CD4-positive, alpha-beta T cell (primary cell): ENCODE measurements at regions of chr6 and their contacts with region 1.

Region 1: DNA sequence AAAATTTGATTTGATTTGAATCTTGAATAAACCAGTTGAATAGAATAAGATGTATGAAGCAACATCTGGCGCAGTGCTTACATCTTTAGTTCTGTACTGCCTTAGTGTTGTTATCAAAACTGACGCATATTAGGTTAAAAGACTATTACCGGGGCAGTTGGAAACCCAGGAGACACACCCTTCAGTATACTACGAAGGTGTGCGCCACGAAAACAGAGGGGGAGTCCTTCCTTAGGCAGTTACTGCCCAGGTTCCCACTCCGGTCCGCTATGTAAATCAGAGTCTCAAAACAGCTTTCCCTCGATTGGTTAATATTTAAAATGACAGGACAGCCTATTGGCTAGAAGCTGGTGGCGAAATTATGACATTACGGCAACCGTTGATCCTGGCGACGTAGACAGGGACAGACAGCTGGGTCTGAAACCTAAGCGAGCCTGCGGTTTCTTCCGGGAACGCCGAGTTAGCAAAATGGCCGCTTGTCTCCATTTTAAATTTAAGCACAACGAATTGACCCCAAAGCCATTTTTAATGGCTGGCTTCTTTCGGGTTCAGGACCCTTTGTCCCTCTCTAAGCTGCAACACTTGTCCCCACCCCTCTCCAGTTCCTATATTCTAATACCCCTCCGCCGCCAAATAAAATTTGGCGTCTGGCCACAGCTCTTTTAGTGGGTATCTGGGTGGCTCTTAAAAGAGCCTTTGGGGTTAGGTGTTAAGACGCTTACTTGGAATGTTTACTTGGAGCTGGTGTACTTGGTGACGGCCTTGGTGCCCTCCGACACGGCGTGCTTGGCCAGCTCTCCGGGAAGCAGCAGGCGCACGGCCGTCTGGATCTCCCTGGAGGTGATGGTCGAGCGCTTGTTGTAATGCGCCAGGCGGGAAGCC is 35.8 kb downstream of the HFE start:
- DNase-seq: peak; percentile 75 to 98 (median 92)
- ATAC-seq: peak; percentile 56
- H3K4me3 ChIP-seq: peak overlapping the region; percentile 88
- H3K4me3 Mint-ChIP-seq: peak overlapping the region; percentile 97
- H3K27ac ChIP-seq: peak overlapping the region; percentile 84 to 95
- H3K27ac Mint-ChIP-seq: peak overlapping the region; percentile 98
- H3K4me1 ChIP-seq: peaks cover 23% of the 10 kb centered on the region
- H3K4me1 Mint-ChIP-seq: peaks cover 41% of the 10 kb centered on the region
- H3K27me3 ChIP-seq: no peaks in the 10 kb centered on the region
- H3K27me3 Mint-ChIP-seq: peaks cover 13% of the 10 kb centered on the region
- CTCF ChIP-seq: no peak

Region 2: DNA sequence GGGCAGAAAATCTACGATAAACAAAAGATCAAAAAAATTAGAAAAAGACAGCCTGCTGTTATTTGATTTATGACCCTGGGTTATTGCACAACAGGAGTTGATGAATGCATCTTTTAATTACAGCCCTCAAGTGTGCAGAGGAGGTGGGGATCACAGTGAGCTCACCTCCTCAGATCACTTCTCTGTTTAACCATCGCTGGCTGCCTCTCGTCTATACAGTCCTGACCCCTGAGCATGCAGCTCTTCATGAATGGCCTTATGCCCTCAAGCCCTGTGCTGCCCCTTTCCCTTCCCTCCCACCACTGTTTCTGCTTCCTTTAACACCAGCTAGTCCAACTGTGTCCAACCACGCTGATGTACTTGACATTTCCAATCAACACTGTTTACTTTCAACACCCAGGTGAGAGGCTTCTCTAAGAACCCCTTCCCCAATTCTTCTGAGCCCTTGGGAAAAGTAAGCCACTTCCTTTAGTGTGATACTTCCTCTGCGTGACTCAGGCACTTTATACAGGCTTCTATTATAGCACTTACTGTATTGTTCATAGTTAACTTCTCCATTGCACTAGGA is 1126.7 kb before region 1 on chr6:
- CTCF ChIA-PET with region 1: no interaction called
- POLR2A ChIA-PET with region 1: no interaction called
- intact Hi-C with region 1: no loop called
- DNase-seq: no peak
- ATAC-seq: no peak
- H3K4me3 ChIP-seq: no peak overlapping the region
- H3K4me3 Mint-ChIP-seq: peak overlapping the region; percentile 34
- H3K27ac ChIP-seq: no peak overlapping the region
- H3K27ac Mint-ChIP-seq: peak overlapping the region; percentile 62
- H3K4me1 ChIP-seq: peaks cover 45% of the 10 kb centered on the region
- H3K4me1 Mint-ChIP-seq: peaks cover 87% of the 10 kb centered on the region
- H3K27me3 ChIP-seq: no peaks in the 10 kb centered on the region
- H3K27me3 Mint-ChIP-seq: no peaks in the 10 kb centered on the region
- CTCF ChIP-seq: no peak

Region 3: GRCh38 chr6:26031595-26032339 is 91.3 kb before region 1 on chr6:
- CTCF ChIA-PET with region 1: interaction called, 8 read pairs
- POLR2A ChIA-PET with region 1: interaction called, 185 read pairs
- intact Hi-C with region 1: loop called in 1 of 2 experiments (anchors 2 kb)
- DNase-seq: peak; percentile 73 to 94 (median 81)
- ATAC-seq: peak; percentile 65
- H3K4me3 ChIP-seq: peak overlapping the region; percentile 64
- H3K4me3 Mint-ChIP-seq: peak overlapping the region; percentile 97
- H3K27ac ChIP-seq: peak overlapping the region; percentile 42 to 72
- H3K27ac Mint-ChIP-seq: peak overlapping the region; percentile 99
- H3K4me1 ChIP-seq: peaks cover 35% of the 10 kb centered on the region
- H3K4me1 Mint-ChIP-seq: peaks cover 46% of the 10 kb centered on the region
- H3K27me3 ChIP-seq: no peaks in the 10 kb centered on the region
- H3K27me3 Mint-ChIP-seq: no peaks in the 10 kb centered on the region
- CTCF ChIP-seq: peak; percentile 22

Region 4: GRCh38 chr6:26075063-26075717 is 47.8 kb before region 1 on chr6:
- CTCF ChIA-PET with region 1: no interaction called
- POLR2A ChIA-PET with region 1: no interaction called
- intact Hi-C with region 1: no loop called
- DNase-seq: no peak
- ATAC-seq: no peak
- H3K4me3 ChIP-seq: no peak overlapping the region
- H3K4me3 Mint-ChIP-seq: no peak overlapping the region
- H3K27ac ChIP-seq: no peak overlapping the region
- H3K27ac Mint-ChIP-seq: no peak overlapping the region
- H3K4me1 ChIP-seq: no peaks in the 10 kb centered on the region
- H3K4me1 Mint-ChIP-seq: no peaks in the 10 kb centered on the region
- H3K27me3 ChIP-seq: no peaks in the 10 kb centered on the region
- H3K27me3 Mint-ChIP-seq: no peaks in the 10 kb centered on the region
- CTCF ChIP-seq: no peak

Region 5: DNA sequence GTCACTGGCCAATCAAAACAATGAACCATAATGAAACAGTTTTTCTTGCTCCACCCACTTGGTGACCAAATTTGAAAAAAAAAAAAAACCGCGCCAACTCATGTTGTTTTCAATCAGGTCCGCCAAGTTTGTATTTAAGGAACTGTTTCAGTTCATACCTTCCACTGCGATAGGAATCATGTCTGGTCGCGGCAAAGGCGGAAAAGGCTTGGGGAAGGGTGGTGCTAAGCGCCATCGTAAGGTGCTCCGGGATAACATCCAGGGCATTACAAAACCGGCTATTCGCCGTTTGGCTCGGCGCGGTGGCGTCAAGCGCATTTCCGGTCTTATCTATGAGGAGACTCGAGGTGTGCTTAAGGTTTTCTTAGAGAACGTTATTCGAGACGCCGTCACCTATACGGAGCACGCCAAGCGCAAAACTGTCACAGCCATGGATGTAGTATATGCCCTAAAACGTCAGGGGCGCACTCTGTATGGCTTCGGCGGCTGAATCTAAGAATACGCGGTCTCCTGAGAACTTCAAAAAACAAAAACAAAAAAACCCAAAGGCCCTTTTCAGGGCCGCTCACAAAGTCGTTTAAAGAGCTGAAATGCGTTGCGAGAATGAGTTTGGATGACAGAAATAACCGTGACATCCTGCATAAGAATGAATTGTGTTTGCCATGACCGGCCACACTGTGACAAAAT is 19.1 kb before region 1 on chr6:
- CTCF ChIA-PET with region 1: interaction called, 24 read pairs
- POLR2A ChIA-PET with region 1: interaction called, 362 read pairs
- intact Hi-C with region 1: loop called (anchors 1 kb)
- DNase-seq: peak; percentile 84 to 96 (median 90)
- ATAC-seq: peak; percentile 88
- H3K4me3 ChIP-seq: peak overlapping the region; percentile 58
- H3K4me3 Mint-ChIP-seq: peak overlapping the region; percentile 94
- H3K27ac ChIP-seq: peak overlapping the region; percentile 83 to 85
- H3K27ac Mint-ChIP-seq: peak overlapping the region; percentile 99
- H3K4me1 ChIP-seq: peaks cover 16% of the 10 kb centered on the region
- H3K4me1 Mint-ChIP-seq: peaks cover 13% of the 10 kb centered on the region
- H3K27me3 ChIP-seq: no peaks in the 10 kb centered on the region
- H3K27me3 Mint-ChIP-seq: peaks cover 5% of the 10 kb centered on the region
- CTCF ChIP-seq: peak; percentile 58

Region 6: DNA sequence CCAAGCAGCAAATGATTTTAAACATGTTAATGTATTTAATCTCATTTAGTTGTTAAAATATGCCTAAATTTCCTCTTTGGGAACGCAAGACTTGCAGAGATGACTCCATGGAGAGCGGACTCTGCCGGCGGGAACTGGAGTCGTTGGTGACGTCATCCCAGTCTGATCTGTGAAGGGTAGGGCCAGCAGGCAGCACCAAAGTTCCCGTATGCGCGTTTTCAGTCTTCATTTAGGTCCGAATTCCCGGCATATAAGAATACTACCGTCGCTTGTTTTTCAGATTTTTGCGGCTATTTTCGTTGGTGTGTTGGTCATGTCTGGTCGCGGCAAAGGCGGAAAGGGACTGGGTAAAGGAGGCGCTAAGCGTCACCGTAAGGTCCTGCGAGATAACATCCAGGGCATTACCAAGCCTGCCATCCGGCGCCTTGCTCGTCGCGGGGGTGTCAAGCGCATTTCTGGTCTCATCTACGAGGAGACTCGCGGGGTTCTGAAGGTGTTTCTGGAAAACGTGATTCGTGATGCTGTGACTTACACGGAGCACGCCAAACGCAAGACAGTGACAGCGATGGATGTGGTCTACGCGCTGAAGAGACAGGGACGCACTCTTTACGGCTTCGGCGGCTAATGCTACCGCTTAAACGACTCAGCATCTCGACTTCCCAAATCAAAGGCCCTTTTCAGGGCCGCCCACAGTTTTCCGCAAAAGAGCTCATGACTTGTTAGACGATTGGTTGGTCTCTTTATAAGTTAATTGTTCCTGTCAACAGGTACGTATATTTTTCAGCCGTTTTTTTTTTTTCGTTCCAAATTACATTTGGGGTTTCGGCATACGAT is 81.5 kb after region 1 on chr6:
- CTCF ChIA-PET with region 1: no interaction called
- POLR2A ChIA-PET with region 1: interaction called, 1,005 read pairs
- intact Hi-C with region 1: loop called in 1 of 2 experiments (anchors 1 kb)
- DNase-seq: peak; percentile 73 to 98 (median 80)
- ATAC-seq: peak; percentile 69
- H3K4me3 ChIP-seq: peak overlapping the region; percentile 68
- H3K4me3 Mint-ChIP-seq: no peak overlapping the region
- H3K27ac ChIP-seq: peak overlapping the region; percentile 89 to 90
- H3K27ac Mint-ChIP-seq: no peak overlapping the region
- H3K4me1 ChIP-seq: peaks cover 34% of the 10 kb centered on the region
- H3K4me1 Mint-ChIP-seq: peaks cover 8% of the 10 kb centered on the region
- H3K27me3 ChIP-seq: no peaks in the 10 kb centered on the region
- H3K27me3 Mint-ChIP-seq: no peaks in the 10 kb centered on the region
- CTCF ChIP-seq: peak; percentile 32

Region 7: GRCh38 chr6:26473758-26474438 is 350.9 kb after region 1 on chr6:
- CTCF ChIA-PET with region 1: no interaction called
- POLR2A ChIA-PET with region 1: interaction called, 16 read pairs
- intact Hi-C with region 1: no loop called
- DNase-seq: peak; percentile 60 to 96 (median 76)
- ATAC-seq: peak; percentile 91
- H3K4me3 ChIP-seq: peak overlapping the region; percentile 56
- H3K4me3 Mint-ChIP-seq: peak overlapping the region; percentile 94
- H3K27ac ChIP-seq: peak overlapping the region; percentile 85 to 90
- H3K27ac Mint-ChIP-seq: peak overlapping the region; percentile 99
- H3K4me1 ChIP-seq: peaks cover 45% of the 10 kb centered on the region
- H3K4me1 Mint-ChIP-seq: peaks cover 64% of the 10 kb centered on the region
- H3K27me3 ChIP-seq: no peaks in the 10 kb centered on the region
- H3K27me3 Mint-ChIP-seq: no peaks in the 10 kb centered on the region
- CTCF ChIP-seq: no peak

Region 8: GRCh38 chr6:27146706-27147505 is 1023.9 kb after region 1 on chr6:
- CTCF ChIA-PET with region 1: no interaction called
- POLR2A ChIA-PET with region 1: interaction called, 85 read pairs
- intact Hi-C with region 1: loop called (anchors 5 kb)
- DNase-seq: peak; percentile 61 to 99 (median 72)
- ATAC-seq: peak; percentile 86
- H3K4me3 ChIP-seq: peak overlapping the region; percentile 69
- H3K4me3 Mint-ChIP-seq: no peak overlapping the region
- H3K27ac ChIP-seq: peak overlapping the region; percentile 84 to 97
- H3K27ac Mint-ChIP-seq: no peak overlapping the region
- H3K4me1 ChIP-seq: peaks cover 17% of the 10 kb centered on the region
- H3K4me1 Mint-ChIP-seq: peaks cover 11% of the 10 kb centered on the region
- H3K27me3 ChIP-seq: no peaks in the 10 kb centered on the region
- H3K27me3 Mint-ChIP-seq: no peaks in the 10 kb centered on the region
- CTCF ChIP-seq: no peak

Region 9: GRCh38 chr6:27864906-27865849 is 1742.1 kb after region 1 on chr6:
- CTCF ChIA-PET with region 1: no interaction called
- POLR2A ChIA-PET with region 1: interaction called, 81 read pairs
- intact Hi-C with region 1: no loop called
- DNase-seq: peak in 13 of 14 experiments; percentile 35 to 97 (median 61)
- ATAC-seq: peak; percentile 83
- H3K4me3 ChIP-seq: peak overlapping the region; percentile 59
- H3K4me3 Mint-ChIP-seq: peak overlapping the region; percentile 100
- H3K27ac ChIP-seq: peak overlapping the region; percentile 54 to 78
- H3K27ac Mint-ChIP-seq: peak overlapping the region; percentile 93
- H3K4me1 ChIP-seq: peaks cover 38% of the 10 kb centered on the region
- H3K4me1 Mint-ChIP-seq: peaks cover 41% of the 10 kb centered on the region
- H3K27me3 ChIP-seq: no peaks in the 10 kb centered on the region
- H3K27me3 Mint-ChIP-seq: peaks cover 3% of the 10 kb centered on the region
- CTCF ChIP-seq: no peak